ENCODE measurements at regions of chr20 and their contacts with region 1.

Region 1: GRCh38 chr20:47379433-47380150 is 23.1 kb upstream of the ZMYND8 start:
- DNase-seq: no peak
- ATAC-seq: peak; percentile 9; the same call in 2 of the 3 replicates
- H3K4me3 ChIP-seq: no peak overlapping the region
- H3K27ac ChIP-seq: no peak overlapping the region
- H3K4me1 ChIP-seq: peaks cover 45% of the 10 kb centered on the region
- H3K27me3 ChIP-seq: no peaks in the 10 kb centered on the region
- CTCF ChIP-seq: no peak
- EP300 ChIP-seq: no peak
- POLR2A ChIP-seq: no peak
- RAD21 ChIP-seq: no peak

Region 2: DNA sequence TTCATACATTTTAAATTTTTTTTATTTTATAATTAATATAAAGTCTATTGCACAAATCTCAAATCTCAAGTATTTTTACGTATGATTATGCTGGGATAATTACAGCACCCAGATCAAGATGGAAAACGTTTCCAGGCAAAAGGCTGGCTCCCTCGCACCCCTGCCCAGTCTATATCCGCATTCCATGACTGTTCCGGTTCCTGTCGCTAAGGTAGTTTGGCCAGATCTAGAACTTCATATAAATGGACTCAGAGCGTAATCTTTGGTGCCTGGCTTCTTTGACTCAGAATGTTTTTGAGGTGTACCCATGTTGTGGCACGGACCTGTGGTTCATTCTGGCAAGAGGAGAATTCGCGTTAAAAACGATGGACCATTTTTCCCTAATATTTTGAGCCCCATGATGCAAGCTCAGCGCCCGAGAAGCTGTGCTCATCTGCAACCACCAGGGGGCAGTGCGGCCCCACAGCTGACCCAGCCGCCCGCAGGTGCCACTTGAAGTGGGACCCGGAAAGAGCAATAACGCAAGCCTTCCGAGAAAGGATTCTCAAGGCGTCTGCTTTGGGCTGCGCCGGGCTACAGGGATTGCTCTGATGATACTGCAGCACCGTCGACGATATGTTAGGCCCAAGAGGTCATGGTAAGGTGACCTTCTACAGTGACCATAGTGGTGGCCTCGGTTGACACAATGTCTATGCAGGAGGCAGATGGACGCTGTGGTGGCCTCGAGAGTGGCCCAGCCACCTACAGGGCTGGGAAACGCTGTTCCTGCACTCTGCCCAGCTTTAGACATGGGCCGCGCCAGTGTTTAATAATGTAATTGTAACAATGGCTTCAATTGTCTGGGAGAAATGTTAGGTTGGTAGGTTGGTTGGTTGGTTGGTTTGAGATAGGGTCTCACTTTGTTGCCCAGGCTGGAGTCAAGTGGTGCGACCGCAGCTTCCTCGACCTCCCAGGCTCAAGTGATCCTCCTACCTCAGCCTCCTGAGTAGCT is 183.2 kb before region 1 on chr20:
- CTCF ChIA-PET with region 1: interaction called, 57 read pairs
- POLR2A ChIA-PET with region 1: interaction called, 10 read pairs
- in situ Hi-C with region 1: loop called (anchors 5 kb)
- intact Hi-C with region 1: loop called (anchors 1 kb)
- DNase-seq: peak; percentile 70
- ATAC-seq: peak; percentile 56
- H3K4me3 ChIP-seq: peak overlapping the region; percentile 15 to 64 (median 44); a peak in 5 of 6 replicates
- H3K27ac ChIP-seq: no peak overlapping the region
- H3K4me1 ChIP-seq: peaks cover 41% of the 10 kb centered on the region
- H3K27me3 ChIP-seq: peaks cover 0 to 7% of the 10 kb centered on the region in 2 experiments; a peak in 3 of 5 replicates
- CTCF ChIP-seq: peak; percentile 99
- EP300 ChIP-seq: no peak
- POLR2A ChIP-seq: no peak
- RAD21 ChIP-seq: peak; percentile 99

Region 3: DNA sequence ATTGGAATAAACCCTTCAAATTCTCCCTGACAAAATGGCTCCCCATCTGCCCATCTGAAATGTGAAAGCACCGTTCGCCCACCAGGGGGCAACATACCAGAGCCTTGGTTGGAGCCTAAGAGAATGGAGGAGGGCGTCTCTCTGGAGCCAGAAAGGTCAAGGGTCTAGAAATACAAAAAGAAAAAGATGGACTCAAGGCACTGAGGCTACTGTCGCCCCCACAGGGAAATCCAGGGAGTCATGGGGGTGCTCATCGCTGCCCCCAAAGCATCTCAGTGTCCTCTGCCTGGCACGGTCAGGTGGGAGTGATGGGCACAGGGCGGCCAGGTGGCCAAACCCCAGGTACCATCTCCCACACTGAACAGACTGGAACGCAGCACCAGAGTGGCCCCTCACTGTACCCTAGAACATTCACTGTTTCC is 159.4 kb before region 1 on chr20:
- CTCF ChIA-PET with region 1: interaction called, 13 read pairs
- POLR2A ChIA-PET with region 1: no interaction called
- in situ Hi-C with region 1: no loop called
- intact Hi-C with region 1: loop called (anchors 1 kb)
- DNase-seq: peak; percentile 61
- ATAC-seq: peak; percentile 60
- H3K4me3 ChIP-seq: no peak overlapping the region
- H3K27ac ChIP-seq: no peak overlapping the region
- H3K4me1 ChIP-seq: peaks cover 15% of the 10 kb centered on the region
- H3K27me3 ChIP-seq: no peaks in the 10 kb centered on the region; a peak in 1 of 5 replicates
- CTCF ChIP-seq: peak; percentile 71
- EP300 ChIP-seq: no peak
- POLR2A ChIP-seq: no peak
- RAD21 ChIP-seq: peak; percentile 42; the same call in 1 of the 2 replicates

Region 4: GRCh38 chr20:47296950-47297349 is 82.6 kb before region 1 on chr20:
- CTCF ChIA-PET with region 1: interaction called, 50 read pairs
- POLR2A ChIA-PET with region 1: no interaction called
- in situ Hi-C with region 1: loop called (anchors 5 kb)
- intact Hi-C with region 1: loop called (anchors 1 kb)
- DNase-seq: no peak
- ATAC-seq: peak; percentile 53
- H3K4me3 ChIP-seq: no peak overlapping the region
- H3K27ac ChIP-seq: no peak overlapping the region
- H3K4me1 ChIP-seq: no peaks in the 10 kb centered on the region
- H3K27me3 ChIP-seq: no peaks in the 10 kb centered on the region
- CTCF ChIP-seq: peak; percentile 67
- EP300 ChIP-seq: no peak
- POLR2A ChIP-seq: no peak
- RAD21 ChIP-seq: peak; percentile 48

Region 5: DNA sequence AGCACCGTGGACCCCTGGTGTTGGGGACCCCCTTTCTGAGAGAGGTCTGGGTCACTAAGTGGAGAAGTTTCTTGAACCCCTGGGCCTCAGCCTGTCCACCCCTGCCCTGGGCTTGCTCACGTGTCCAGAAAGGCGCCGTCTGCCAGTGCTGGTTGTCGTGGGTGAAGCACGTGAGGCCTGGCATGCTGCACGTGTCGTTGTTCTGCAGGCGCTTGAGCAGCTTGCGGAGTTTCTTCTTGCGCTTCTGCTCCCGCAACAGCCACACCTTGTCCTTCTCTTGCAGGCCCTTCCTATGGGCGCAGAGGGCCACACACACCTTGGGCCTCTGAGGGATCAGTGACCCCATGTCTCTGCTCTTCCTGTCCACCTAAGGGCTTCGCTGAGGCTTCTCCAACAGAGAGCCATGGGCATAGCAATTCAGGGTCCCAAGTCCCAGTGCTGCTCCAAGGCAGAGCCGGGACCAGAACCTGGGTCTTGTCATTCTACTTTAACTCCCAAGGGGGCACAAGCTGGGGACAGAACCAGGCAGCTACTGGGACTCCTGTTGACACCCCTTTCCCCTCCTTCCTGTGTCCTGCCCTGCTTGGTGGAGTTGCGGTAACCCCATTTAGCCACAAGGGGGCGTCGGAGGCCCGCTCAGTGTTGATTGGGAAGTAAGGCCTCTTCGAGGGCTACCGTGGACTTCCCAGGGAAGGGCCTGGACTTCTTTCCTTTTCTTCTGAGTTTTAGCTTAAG is 283.9 kb after region 1 on chr20:
- CTCF ChIA-PET with region 1: no interaction called
- POLR2A ChIA-PET with region 1: no interaction called
- in situ Hi-C with region 1: no loop called
- intact Hi-C with region 1: no loop called
- DNase-seq: peak; percentile 83
- ATAC-seq: peak; percentile 77
- H3K4me3 ChIP-seq: no peak overlapping the region; a peak in 1 of 6 replicates
- H3K27ac ChIP-seq: no peak overlapping the region
- H3K4me1 ChIP-seq: peaks cover 39% of the 10 kb centered on the region
- H3K27me3 ChIP-seq: no peaks in the 10 kb centered on the region
- CTCF ChIP-seq: peak; percentile 99
- EP300 ChIP-seq: no peak
- POLR2A ChIP-seq: no peak
- RAD21 ChIP-seq: peak; percentile 87; the same call in 1 of the 2 replicates

Measured in HepG2 (cell line).